Posterior cingulate gyrus (tissue), 11 donors: ENCODE measurements at regions of chr20 and their contacts with region 1.

Region 1: GRCh38 chr20:50744143-50744792 is 12.9 kb downstream of the PARD6B start:
- DNase-seq: peak in 1 of 10 donors; percentile 14

Region 2: DNA sequence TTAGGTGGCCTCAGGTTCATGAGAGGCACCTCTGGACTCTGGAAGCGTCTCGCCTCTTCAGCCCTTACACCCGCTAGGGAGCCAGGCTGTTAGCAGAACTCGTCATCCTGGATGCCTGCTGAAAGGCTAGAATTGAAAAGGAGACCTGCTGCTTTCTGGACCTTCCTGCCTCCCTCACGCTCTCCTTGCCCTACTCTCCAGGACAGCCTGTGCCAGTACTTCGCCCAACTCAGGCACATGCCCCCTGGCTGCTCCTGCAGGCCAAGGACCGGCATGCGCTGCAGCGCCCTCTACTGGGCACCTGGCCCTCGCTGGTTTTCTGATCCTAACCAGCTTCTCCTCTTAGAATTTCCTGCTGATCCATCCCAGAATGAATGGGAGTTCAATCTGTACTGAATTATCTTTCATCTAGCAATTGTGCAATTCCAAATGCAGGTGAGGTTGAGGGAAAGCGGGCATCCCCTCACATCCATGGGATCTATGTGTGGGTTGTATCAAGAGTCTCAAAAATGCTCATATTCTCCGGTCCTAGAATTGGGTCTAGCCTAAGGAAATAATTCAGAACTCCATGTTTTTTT is 156.1 kb before region 1 on chr20:
- intact Hi-C with region 1: loop called (anchors 10 kb)
- DNase-seq: peak in 9 of 10 donors; percentile 54 to 95 (median 73)

Region 3: DNA sequence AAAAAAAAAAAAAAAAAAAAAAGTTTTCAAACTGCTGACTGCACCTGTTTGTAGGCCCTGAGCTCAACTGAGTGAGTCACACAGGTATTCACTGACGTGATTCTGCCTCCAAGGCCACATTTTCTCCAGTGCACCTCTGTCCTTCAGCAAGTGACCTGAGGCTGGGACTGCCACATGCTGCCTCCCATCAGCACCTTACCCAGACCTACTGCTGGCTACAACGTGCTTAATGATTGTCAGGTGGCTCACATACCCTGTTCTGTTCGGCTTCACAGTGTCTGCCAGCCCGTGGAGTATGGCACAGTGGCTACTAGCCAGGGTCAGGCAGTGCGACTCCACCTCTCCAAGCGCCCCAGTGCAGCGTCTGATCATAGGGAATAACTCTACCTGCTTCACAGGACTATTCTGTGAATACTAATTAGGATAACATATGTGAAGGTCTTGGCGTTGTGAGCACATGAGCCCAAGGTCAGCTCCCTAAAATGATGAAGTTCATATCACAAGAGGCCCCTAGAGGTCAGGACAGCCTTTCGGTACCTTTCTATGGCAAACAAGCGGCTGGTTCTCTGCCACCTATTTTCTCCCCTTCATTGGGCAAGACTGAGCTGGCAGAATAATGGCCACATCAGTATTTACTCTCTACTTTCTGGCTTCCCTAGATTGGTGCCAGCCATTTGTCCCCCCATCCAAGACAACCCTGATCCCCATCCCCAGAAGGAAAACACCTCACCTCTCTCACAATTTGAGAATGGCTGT is 81.0 kb before region 1 on chr20:
- intact Hi-C with region 1: loop called (anchors 10 kb)
- DNase-seq: peak in 3 of 10 donors; percentile 27 to 49 (median 37)